Activated naive CD4-positive, alpha-beta T cell treated with anti-CD3 and anti-CD28 coated beads for 36 hours (primary cell): ENCODE measurements at regions of chr1 and their contacts with region 1.

Region 1: DNA sequence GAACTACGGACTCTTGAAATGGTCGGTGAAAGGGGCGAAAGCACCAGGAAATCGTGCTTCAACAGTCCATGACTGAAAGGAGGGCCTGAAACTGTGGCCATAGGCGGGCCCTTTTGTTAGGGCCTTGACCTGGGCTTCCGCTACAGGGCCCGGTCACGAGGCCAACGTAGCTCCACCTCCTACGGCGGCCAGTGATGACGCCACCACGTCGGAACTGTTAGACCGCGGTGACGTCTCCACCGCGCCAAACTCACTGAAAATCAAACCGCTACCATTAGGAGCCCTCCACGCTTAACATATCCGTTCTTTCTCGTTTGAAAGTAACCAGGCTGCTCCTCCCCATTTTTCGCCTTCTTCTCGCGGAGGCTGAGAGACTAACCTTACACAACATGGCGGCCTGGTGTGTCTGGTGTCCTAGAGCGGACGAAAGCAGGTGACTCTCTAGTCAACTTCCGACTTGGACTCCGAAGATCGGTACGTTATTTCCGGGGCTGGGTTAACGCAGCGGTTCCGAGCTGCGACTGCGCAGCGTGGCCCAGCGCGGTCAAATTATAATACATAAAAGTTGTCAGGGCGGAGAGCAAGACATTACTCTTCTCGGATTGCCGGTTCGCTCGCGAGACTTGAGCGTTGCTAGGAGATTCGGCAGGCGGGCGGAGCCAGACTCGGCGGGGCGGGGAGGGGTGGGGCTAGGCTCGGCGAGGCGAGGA is 376 bp upstream of the CACYBP start:
- DNase-seq: peak; percentile 98
- H3K4me3 Mint-ChIP-seq: no peak overlapping the region
- H3K27ac Mint-ChIP-seq: no peak overlapping the region
- H3K4me1 Mint-ChIP-seq: peaks cover 46% of the 10 kb centered on the region
- H3K27me3 Mint-ChIP-seq: no peaks in the 10 kb centered on the region

Region 2: DNA sequence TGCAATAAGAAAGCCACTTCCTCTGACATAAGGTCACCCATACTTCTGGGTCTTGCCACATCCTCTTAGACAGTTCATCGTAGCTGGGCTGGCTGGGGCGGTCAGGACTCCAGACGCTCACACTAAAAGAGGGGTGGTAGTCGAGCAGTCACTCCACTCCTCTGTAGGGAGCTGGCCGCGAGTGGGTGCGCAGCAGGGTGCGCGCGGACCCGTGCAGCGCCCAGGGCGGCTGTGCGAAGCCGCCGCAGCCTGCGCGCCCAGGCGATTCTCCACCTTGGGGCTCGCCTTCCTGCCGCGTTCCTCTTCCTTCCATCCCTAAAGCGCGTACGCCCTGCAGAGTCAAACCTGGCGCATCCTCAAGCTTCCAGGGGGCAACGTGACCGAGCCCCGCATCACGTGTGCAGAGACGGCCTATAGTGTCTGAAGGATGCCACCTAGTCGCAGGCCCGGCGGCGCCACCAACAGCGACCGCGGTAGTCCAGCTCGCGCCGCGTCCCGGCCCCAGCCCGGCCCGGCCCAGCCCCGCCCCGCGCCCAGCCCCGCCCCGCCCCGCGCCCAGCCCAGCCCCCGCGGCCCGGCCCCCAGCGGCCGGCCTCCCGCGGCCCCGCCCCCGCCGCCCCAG is 1522.6 kb before region 1 on chr1:
- CTCF ChIA-PET with region 1: no interaction called
- intact Hi-C with region 1: loop called (anchors 1 kb)
- DNase-seq: peak; percentile 86
- H3K4me3 Mint-ChIP-seq: peak overlapping the region; percentile 91
- H3K27ac Mint-ChIP-seq: peak overlapping the region; percentile 93
- H3K4me1 Mint-ChIP-seq: peaks cover 58% of the 10 kb centered on the region
- H3K27me3 Mint-ChIP-seq: no peaks in the 10 kb centered on the region

Region 3: DNA sequence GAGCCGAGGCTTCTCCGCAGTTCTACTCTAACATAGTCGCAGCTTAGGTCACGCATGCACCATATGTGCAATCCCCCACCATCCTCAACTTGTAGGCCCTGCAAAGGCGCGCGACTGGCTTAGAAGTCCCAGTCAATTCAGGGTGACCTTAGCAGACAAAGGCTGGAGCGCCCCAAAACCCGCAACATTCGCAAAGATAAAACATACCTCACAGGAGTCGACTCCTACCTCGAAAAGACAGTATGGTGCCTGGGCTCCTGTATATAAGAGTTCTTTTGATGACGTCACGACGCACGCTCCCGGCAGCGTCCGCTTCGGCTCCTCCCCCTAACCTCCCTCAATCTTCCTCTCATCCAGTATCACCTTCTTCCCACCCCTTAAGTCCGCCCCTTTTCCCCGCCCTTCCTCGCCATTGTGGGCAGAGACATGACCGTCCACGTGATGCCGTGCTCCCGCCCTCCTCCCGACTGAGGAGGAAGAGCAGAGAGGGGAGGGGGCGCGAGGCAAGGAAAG is 1131.6 kb before region 1 on chr1 and contains the start of gene GAS5:
- CTCF ChIA-PET with region 1: no interaction called
- intact Hi-C with region 1: loop called (anchors 1 kb)
- DNase-seq: peak; percentile 100
- H3K4me3 Mint-ChIP-seq: peak within 1 kb of the TSS; percentile 94
- H3K27ac Mint-ChIP-seq: peak within 1 kb of the TSS; percentile 98
- H3K4me1 Mint-ChIP-seq: peaks cover 51% of the 10 kb centered on the region
- H3K27me3 Mint-ChIP-seq: no peaks in the 10 kb centered on the region
- total RNA-seq, gene GAS5: 1,367 to 1,374 TPM

Region 4: GRCh38 chr1:174262349-174263241 is 736.8 kb before region 1 on chr1:
- CTCF ChIA-PET with region 1: no interaction called
- intact Hi-C with region 1: loop called (anchors 2 kb)
- DNase-seq: peak; percentile 12
- H3K4me3 Mint-ChIP-seq: no peak overlapping the region
- H3K27ac Mint-ChIP-seq: no peak overlapping the region
- H3K4me1 Mint-ChIP-seq: no peaks in the 10 kb centered on the region
- H3K27me3 Mint-ChIP-seq: no peaks in the 10 kb centered on the region

Region 5: DNA sequence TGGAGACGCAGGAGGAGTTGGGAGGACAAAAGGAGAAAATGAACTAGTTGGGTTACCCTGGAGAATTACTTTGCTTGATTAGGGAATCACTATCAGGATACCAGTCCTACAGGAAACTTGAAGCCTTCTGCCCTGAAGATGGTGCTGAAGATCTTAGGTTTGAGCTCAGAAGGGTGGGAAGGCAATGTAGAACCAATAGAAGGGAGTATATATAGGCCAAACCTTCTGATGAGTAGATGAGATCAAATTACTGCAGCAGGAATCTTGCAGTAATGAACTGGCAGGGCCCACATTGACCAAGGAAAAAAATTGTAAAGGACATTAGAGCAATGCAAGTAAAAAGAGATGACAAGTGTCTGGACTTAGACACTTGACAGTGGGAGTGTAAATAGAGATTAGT is 116.0 kb before region 1 on chr1:
- CTCF ChIA-PET with region 1: interaction called, 8 read pairs
- intact Hi-C with region 1: loop called (anchors 1 kb)
- DNase-seq: no peak
- H3K4me3 Mint-ChIP-seq: no peak overlapping the region
- H3K27ac Mint-ChIP-seq: no peak overlapping the region
- H3K4me1 Mint-ChIP-seq: no peaks in the 10 kb centered on the region
- H3K27me3 Mint-ChIP-seq: no peaks in the 10 kb centered on the region

Region 6: DNA sequence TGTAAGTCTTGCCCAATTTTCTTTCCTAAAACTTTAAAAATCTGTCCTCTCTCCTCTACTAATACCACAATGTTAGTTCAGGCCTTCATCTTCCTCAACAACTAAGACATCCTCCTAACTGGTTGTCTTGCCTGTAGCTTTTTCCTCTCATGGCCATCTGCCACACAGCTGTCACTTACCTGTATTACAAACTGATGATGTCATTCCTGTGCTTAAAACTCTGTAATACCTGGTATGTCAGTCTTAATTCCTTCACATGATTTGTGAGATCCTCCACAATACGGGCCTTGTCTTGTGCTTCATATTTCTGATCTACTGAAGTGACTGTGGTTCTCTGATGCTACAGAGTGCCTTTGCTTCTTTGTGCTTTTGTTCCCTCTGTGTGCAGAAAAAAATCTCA is 14.1 kb after region 1 on chr1:
- CTCF ChIA-PET with region 1: no interaction called
- intact Hi-C with region 1: loop called (anchors 1 kb)
- DNase-seq: no peak
- H3K4me3 Mint-ChIP-seq: no peak overlapping the region
- H3K27ac Mint-ChIP-seq: peak overlapping the region; percentile 59
- H3K4me1 Mint-ChIP-seq: peaks cover 17% of the 10 kb centered on the region
- H3K27me3 Mint-ChIP-seq: no peaks in the 10 kb centered on the region

Region 7: DNA sequence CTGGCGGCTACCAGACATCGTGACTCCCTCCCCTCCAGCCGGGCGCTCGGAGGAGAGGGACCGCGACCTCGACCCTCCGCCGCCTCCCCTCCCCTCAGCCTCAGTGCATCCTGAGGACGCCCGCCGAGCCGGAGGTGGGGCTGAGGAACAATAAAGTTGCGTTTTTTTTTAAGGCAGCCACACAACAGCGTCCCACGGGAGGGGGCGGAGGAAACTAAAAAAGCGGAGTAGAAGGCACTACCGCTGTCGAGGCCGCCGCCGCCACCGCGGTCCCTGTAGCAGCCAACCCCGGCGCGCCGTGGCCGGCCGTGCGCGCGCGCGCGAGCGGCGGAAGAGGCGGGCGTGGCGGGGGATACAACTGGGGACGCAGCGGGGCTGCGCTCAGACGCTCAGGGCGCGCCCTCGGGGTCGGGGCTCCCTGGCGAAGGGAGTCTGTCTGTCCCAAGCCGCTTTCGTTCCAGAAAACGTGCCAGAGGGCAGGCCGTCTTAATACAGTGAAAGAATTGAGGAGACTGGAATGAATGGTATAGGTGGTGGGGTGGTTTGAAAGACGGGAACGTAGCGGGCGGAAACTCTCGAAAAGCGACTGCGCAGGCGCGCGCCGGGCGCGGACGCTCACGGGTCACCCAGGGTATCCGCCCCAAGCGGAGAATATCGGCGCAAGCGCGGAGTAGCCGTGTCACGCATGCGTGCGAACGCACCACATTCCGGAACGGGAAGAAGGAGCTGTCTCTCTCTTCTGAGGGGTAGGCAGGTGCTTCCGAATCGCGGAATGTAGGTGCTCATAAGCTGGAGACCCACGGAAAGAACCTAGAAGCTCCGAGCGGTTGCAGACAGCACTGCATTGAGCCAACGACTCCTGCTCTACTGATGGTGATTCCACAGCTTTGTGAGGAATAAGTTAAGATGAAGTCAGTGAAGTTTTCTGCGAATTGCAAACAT is 1207.9 kb after region 1 on chr1 and contains the start of gene COP1:
- CTCF ChIA-PET with region 1: no interaction called
- intact Hi-C with region 1: loop called (anchors 2 kb)
- DNase-seq: peak; percentile 97
- H3K4me3 Mint-ChIP-seq: peak within 1 kb of the TSS; percentile 98
- H3K27ac Mint-ChIP-seq: peak within 1 kb of the TSS; percentile 98
- H3K4me1 Mint-ChIP-seq: peaks cover 30% of the 10 kb centered on the region
- H3K27me3 Mint-ChIP-seq: no peaks in the 10 kb centered on the region
- total RNA-seq, gene COP1: 37.4 to 37.6 TPM